ENCODE measurements at regions of chr16 and their contacts with region 1.

Region 1: DNA sequence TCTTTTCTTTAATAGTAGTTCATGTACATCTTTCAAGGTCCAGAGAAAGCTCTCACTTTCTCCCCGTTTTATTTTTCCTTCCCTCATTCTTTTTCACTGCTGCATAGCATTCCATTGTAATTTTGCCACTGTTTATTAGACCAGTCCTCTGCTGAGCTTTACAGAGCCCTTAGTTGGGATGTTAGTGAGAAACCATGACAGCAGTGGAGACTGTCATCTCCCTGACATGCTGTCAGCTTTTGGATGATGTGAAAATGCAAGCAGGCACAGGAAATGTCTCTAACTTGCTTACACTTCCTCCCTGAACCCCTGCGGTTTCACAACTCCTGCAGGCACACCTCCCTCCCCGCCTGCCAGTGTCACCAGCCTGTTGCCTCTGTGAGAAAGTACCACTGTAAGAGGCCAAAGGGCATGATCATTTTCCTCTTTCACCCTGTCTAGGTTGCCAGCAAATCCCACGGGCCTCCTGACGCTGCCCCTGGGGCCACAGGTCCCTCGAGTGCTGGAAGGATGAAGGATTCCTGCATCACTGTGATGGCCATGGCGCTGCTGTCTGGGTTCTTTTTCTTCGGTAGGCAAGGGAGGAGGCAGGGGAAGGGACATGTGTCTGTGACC is at the start of gene ITGAL:
- DNase-seq: peak; percentile 76 to 93 (median 84)
- H3K4me3 ChIP-seq: peak within 1 kb of the TSS; percentile 91
- H3K4me3 Mint-ChIP-seq: peak within 1 kb of the TSS; percentile 96 to 100 (median 98)
- H3K27ac ChIP-seq: peak within 1 kb of the TSS; percentile 74
- H3K27ac Mint-ChIP-seq: peak within 1 kb of the TSS; percentile 94 to 99 (median 97)
- H3K4me1 ChIP-seq: peaks cover 65% of the 10 kb centered on the region
- H3K4me1 Mint-ChIP-seq: peaks cover 54 to 76% (median 56%) of the 10 kb centered on the region in 3 donors
- H3K27me3 ChIP-seq: no peaks in the 10 kb centered on the region
- H3K27me3 Mint-ChIP-seq: peaks cover 0 to 1% of the 10 kb centered on the region in 2 donors
- total RNA-seq, gene ITGAL: 333 to 363 TPM

Region 2: GRCh38 chr16:30458561-30459394 is 13.7 kb before region 1 on chr16:
- CTCF ChIA-PET with region 1: interaction called, 43 read pairs
- POLR2A ChIA-PET with region 1: interaction called, 102 read pairs
- DNase-seq: peak; percentile 50 to 89 (median 71)
- H3K4me3 ChIP-seq: peak overlapping the region; percentile 18
- H3K4me3 Mint-ChIP-seq: peak overlapping the region; percentile 41 to 82 (median 70)
- H3K27ac ChIP-seq: no peak overlapping the region
- H3K27ac Mint-ChIP-seq: peak overlapping the region; percentile 68 to 95 (median 89)
- H3K4me1 ChIP-seq: peaks cover 25% of the 10 kb centered on the region
- H3K4me1 Mint-ChIP-seq: peaks cover 41 to 72% (median 63%) of the 10 kb centered on the region in 3 donors
- H3K27me3 ChIP-seq: no peaks in the 10 kb centered on the region
- H3K27me3 Mint-ChIP-seq: no peaks in the 10 kb centered on the region

Region 3: DNA sequence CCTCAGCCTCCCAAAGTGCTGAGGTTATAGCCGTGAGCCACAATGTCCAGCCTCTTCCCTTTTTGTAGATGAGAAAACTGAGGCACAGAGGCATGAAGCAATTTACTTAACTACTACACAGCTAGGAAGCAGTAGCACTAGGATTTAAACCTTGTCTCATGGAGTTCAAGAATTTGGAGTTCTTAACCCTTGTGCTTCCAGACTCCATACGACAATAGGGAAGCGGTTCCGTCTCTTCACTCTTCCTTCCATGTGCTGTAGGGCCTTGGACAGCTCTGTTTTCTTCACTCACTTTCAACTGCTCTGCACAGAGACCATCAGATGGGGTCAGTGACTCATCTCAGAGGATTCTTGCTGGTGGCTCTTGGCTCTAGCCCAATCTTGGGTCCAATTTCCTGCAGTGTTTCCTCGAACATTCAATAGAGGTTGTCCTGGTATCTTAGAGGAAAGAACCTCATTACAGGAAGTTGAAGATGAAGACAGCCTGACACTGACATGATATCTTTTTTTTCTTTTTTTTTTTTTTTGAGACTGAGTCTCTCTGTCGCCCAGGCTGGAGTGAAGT is 19.4 kb after region 1 on chr16:
- CTCF ChIA-PET with region 1: interaction called, 7 read pairs
- POLR2A ChIA-PET with region 1: interaction called, 13 read pairs
- DNase-seq: peak in 3 of 5 donors; percentile 10 to 68 (median 28)
- H3K4me3 ChIP-seq: no peak overlapping the region
- H3K4me3 Mint-ChIP-seq: peak overlapping the region in 2 of 7 donors; percentile 6 to 46
- H3K27ac ChIP-seq: peak overlapping the region; percentile 44
- H3K27ac Mint-ChIP-seq: peak overlapping the region in 5 of 8 donors; percentile 57 to 91 (median 68)
- H3K4me1 ChIP-seq: peaks cover 13% of the 10 kb centered on the region
- H3K4me1 Mint-ChIP-seq: peaks cover 20 to 45% (median 28%) of the 10 kb centered on the region in 3 donors
- H3K27me3 ChIP-seq: no peaks in the 10 kb centered on the region
- H3K27me3 Mint-ChIP-seq: no peaks in the 10 kb centered on the region

Measured in CD8-positive, alpha-beta memory T cell (primary cell).